ENCODE measurements at regions of chr5 and their contacts with region 1.

Region 1: GRCh38 chr5:96336351-96336985 is 96.6 kb downstream of the PCSK1 start:
- DNase-seq: peak; percentile 19 to 81 (median 57)
- ATAC-seq: peak; percentile 97
- H3K4me3 ChIP-seq: no peak overlapping the region
- H3K4me3 Mint-ChIP-seq: no peak overlapping the region
- H3K27ac ChIP-seq: no peak overlapping the region
- H3K27ac Mint-ChIP-seq: no peak overlapping the region
- H3K4me1 ChIP-seq: no peaks in the 10 kb centered on the region
- H3K4me1 Mint-ChIP-seq: no peaks in the 10 kb centered on the region
- H3K27me3 ChIP-seq: no peaks in the 10 kb centered on the region
- H3K27me3 Mint-ChIP-seq: peaks cover 14% of the 10 kb centered on the region
- CTCF ChIP-seq: peak; percentile 92

Region 2: GRCh38 chr5:95646554-95647431 is 689.7 kb before region 1 on chr5 and contains the start of gene RFESD:
- CTCF ChIA-PET with region 1: interaction called, 4 read pairs
- POLR2A ChIA-PET with region 1: no interaction called
- intact Hi-C with region 1: loop called in 1 of 2 experiments (anchors 1 kb)
- DNase-seq: peak; percentile 86 to 96 (median 93)
- ATAC-seq: peak; percentile 93
- H3K4me3 ChIP-seq: peak within 1 kb of the TSS; percentile 67 to 77
- H3K4me3 Mint-ChIP-seq: peak within 1 kb of the TSS; percentile 91
- H3K27ac ChIP-seq: peak within 1 kb of the TSS; percentile 76 to 85
- H3K27ac Mint-ChIP-seq: peak within 1 kb of the TSS; percentile 94
- H3K4me1 ChIP-seq: peaks cover 20% of the 10 kb centered on the region
- H3K4me1 Mint-ChIP-seq: peaks cover 40% of the 10 kb centered on the region
- H3K27me3 ChIP-seq: no peaks in the 10 kb centered on the region
- H3K27me3 Mint-ChIP-seq: no peaks in the 10 kb centered on the region
- CTCF ChIP-seq: peak; percentile 22
- total RNA-seq, gene RFESD: 1.00 to 1.7 TPM

Region 3: GRCh38 chr5:95664204-95664786 is 672.2 kb before region 1 on chr5:
- CTCF ChIA-PET with region 1: interaction called, 6 read pairs
- POLR2A ChIA-PET with region 1: no interaction called
- intact Hi-C with region 1: loop called in 1 of 2 experiments (anchors 10 kb)
- DNase-seq: peak in 4 of 9 experiments; percentile 29 to 55 (median 42)
- ATAC-seq: peak; percentile 54
- H3K4me3 ChIP-seq: no peak overlapping the region
- H3K4me3 Mint-ChIP-seq: no peak overlapping the region
- H3K27ac ChIP-seq: no peak overlapping the region
- H3K27ac Mint-ChIP-seq: no peak overlapping the region
- H3K4me1 ChIP-seq: no peaks in the 10 kb centered on the region
- H3K4me1 Mint-ChIP-seq: peaks cover 3% of the 10 kb centered on the region
- H3K27me3 ChIP-seq: no peaks in the 10 kb centered on the region
- H3K27me3 Mint-ChIP-seq: no peaks in the 10 kb centered on the region
- CTCF ChIP-seq: peak; percentile 94

Region 4: GRCh38 chr5:95858661-95859326 is 477.7 kb before region 1 on chr5:
- CTCF ChIA-PET with region 1: interaction called, 312 read pairs
- POLR2A ChIA-PET with region 1: no interaction called
- intact Hi-C with region 1: loop called (anchors 1 kb)
- DNase-seq: peak; percentile 76 to 95 (median 92)
- ATAC-seq: peak; percentile 98
- H3K4me3 ChIP-seq: no peak overlapping the region
- H3K4me3 Mint-ChIP-seq: peak overlapping the region; percentile 47
- H3K27ac ChIP-seq: no peak overlapping the region
- H3K27ac Mint-ChIP-seq: peak overlapping the region; percentile 34
- H3K4me1 ChIP-seq: peaks cover 9% of the 10 kb centered on the region
- H3K4me1 Mint-ChIP-seq: peaks cover 25% of the 10 kb centered on the region
- H3K27me3 ChIP-seq: no peaks in the 10 kb centered on the region
- H3K27me3 Mint-ChIP-seq: peaks cover 10% of the 10 kb centered on the region
- CTCF ChIP-seq: peak; percentile 93

Region 5: DNA sequence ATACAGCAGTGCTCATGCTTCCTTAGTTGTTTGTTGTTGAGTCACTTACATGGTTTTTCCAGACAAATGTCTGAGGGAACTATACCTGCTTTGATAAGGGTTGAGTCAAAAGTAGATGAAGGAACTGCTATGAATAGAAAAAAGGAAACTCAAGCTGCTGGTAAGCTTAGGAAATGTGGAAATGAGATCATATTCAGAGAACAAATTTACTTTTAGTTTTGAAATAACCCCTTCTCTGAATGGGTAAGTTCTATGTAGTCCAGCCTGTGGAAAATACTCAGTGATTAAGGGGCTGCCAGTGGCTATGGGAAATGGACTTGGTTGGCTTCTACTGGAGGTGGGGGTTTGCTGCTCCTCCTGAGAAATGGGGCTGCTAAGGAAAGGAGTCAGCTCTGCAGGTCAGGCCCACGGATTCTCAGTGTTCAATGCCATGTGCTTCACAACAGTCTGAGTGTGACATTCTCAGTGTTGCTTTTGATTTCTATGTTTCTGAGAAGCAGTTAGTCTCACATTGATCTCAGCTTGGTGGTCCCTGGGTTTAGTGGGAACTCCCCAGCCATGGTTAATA is 466.3 kb before region 1 on chr5:
- CTCF ChIA-PET with region 1: interaction called, 312 read pairs
- POLR2A ChIA-PET with region 1: no interaction called
- intact Hi-C with region 1: no loop called
- DNase-seq: peak in 1 of 9 experiments; percentile 35
- ATAC-seq: peak; percentile 33
- H3K4me3 ChIP-seq: no peak overlapping the region
- H3K4me3 Mint-ChIP-seq: peak overlapping the region; percentile 53
- H3K27ac ChIP-seq: no peak overlapping the region
- H3K27ac Mint-ChIP-seq: no peak overlapping the region
- H3K4me1 ChIP-seq: peaks cover 32% of the 10 kb centered on the region
- H3K4me1 Mint-ChIP-seq: peaks cover 31% of the 10 kb centered on the region
- H3K27me3 ChIP-seq: no peaks in the 10 kb centered on the region
- H3K27me3 Mint-ChIP-seq: no peaks in the 10 kb centered on the region
- CTCF ChIP-seq: no peak

Region 6: DNA sequence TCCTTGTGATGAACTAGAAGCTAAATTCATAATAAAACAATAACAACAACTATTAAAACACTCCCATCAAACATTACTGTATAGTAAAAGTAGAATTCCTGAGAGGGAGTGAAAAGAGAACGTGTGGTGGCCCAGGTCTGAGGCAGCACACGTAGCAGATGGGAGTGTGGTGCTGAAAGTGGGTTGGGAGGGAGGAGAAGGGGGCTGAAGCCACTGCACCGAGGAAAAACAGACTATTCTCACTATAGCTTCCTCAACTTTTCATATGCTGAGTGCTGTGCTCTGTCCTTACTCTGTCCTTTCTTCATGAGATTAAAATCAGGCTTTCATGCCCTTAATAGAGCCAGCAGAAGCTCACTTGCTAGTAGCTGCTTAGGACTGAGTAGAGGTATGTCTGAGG is 74.4 kb before region 1 on chr5:
- CTCF ChIA-PET with region 1: no interaction called
- POLR2A ChIA-PET with region 1: no interaction called
- intact Hi-C with region 1: no loop called
- DNase-seq: no peak
- ATAC-seq: no peak
- H3K4me3 ChIP-seq: no peak overlapping the region
- H3K4me3 Mint-ChIP-seq: no peak overlapping the region
- H3K27ac ChIP-seq: no peak overlapping the region
- H3K27ac Mint-ChIP-seq: no peak overlapping the region
- H3K4me1 ChIP-seq: no peaks in the 10 kb centered on the region
- H3K4me1 Mint-ChIP-seq: no peaks in the 10 kb centered on the region
- H3K27me3 ChIP-seq: no peaks in the 10 kb centered on the region
- H3K27me3 Mint-ChIP-seq: peaks cover 10% of the 10 kb centered on the region
- CTCF ChIP-seq: no peak

Region 7: GRCh38 chr5:96324708-96325107 is 11.8 kb before region 1 on chr5:
- CTCF ChIA-PET with region 1: interaction called, 32 read pairs
- POLR2A ChIA-PET with region 1: no interaction called
- intact Hi-C with region 1: no loop called
- DNase-seq: no peak
- ATAC-seq: no peak
- H3K4me3 ChIP-seq: no peak overlapping the region
- H3K4me3 Mint-ChIP-seq: no peak overlapping the region
- H3K27ac ChIP-seq: no peak overlapping the region
- H3K27ac Mint-ChIP-seq: no peak overlapping the region
- H3K4me1 ChIP-seq: no peaks in the 10 kb centered on the region
- H3K4me1 Mint-ChIP-seq: no peaks in the 10 kb centered on the region
- H3K27me3 ChIP-seq: peaks cover 0 to 2% of the 10 kb centered on the region in 2 experiments
- H3K27me3 Mint-ChIP-seq: peaks cover 7% of the 10 kb centered on the region
- CTCF ChIP-seq: no peak

Measured in CD8-positive, alpha-beta T cell (primary cell).